Adrenal gland (tissue), 19 donors: ENCODE measurements at regions of chr15 and their contacts with region 1.

Region 1: DNA sequence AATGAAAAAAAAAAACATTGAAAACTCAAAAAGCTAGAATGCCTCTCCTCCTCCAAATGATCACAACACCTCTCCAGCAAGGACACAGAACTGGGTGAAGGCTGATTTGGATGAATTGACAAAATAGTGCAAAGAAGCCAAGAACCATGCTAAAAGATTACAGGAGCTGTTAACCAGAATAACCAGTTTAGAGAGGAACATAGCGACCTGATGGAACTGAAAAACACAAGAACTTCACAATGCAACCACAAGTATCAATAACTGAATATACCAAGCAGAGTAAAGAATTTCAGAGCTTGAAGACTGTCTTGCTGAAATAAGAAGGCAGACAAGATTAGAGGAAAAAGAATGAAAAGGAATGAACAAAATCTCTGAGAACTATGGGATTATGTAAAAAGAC is 90.6 kb upstream of the THSD4 start:
- DNase-seq: no peak
- H3K4me3 ChIP-seq: no peak overlapping the region
- H3K27ac ChIP-seq: no peak overlapping the region
- H3K4me1 ChIP-seq: no peaks in the 10 kb centered on the region
- H3K27me3 ChIP-seq: no peaks in the 10 kb centered on the region
- CTCF ChIP-seq: no peak
- POLR2A ChIP-seq: no peak

Region 2: GRCh38 chr15:71103102-71103676 is 78.5 kb after region 1 on chr15:
- intact Hi-C with region 1: loop called in 1 of 2 experiments (anchors 10 kb)
- DNase-seq: peak in 3 of 7 donors; percentile 16 to 53 (median 42)
- H3K4me3 ChIP-seq: no peak overlapping the region
- H3K27ac ChIP-seq: no peak overlapping the region
- H3K4me1 ChIP-seq: no peaks in the 10 kb centered on the region
- H3K27me3 ChIP-seq: no peaks in the 10 kb centered on the region
- CTCF ChIP-seq: peak in 5 of 6 experiments; percentile 25 to 45 (median 40)
- POLR2A ChIP-seq: no peak